ENCODE measurements at regions of chr1 and their contacts with region 1.

Region 1: GRCh38 chr1:29124366-29125236 is 898 bp upstream of the TMEM200B start:
- DNase-seq: peak; percentile 88
- H3K4me3 ChIP-seq: peak overlapping the region; percentile 56 to 80
- H3K27ac ChIP-seq: peak overlapping the region; percentile 96 to 98
- H3K4me1 ChIP-seq: peaks cover 15% of the 10 kb centered on the region
- H3K27me3 ChIP-seq: no peaks in the 10 kb centered on the region
- CTCF ChIP-seq: peak; percentile 79 to 97 (median 96)
- POLR2A ChIP-seq: peak; percentile 65

Region 2: GRCh38 chr1:29181413-29182225 is 57.0 kb after region 1 on chr1 and contains the start of gene SRSF4:
- intact Hi-C with region 1: loop called (anchors 5 kb)
- DNase-seq: peak; percentile 99
- H3K4me3 ChIP-seq: peak within 1 kb of the TSS; percentile 96 to 97
- H3K27ac ChIP-seq: peak within 1 kb of the TSS; percentile 96 to 100
- H3K4me1 ChIP-seq: peaks cover 24% of the 10 kb centered on the region
- H3K27me3 ChIP-seq: no peaks in the 10 kb centered on the region
- CTCF ChIP-seq: peak; percentile 67 to 88 (median 73)
- POLR2A ChIP-seq: peak; percentile 72
- total RNA-seq, gene SRSF4: 77.1 to 81.7 TPM

Measured in testis (tissue), 5 donors.